ENCODE measurements at regions of chr19 and their contacts with region 1.

Region 1: GRCh38 chr19:18521885-18522624 is at the start of gene ELL:
- DNase-seq: peak; percentile 100
- ATAC-seq: peak; percentile 89
- H3K4me3 Mint-ChIP-seq: peak within 1 kb of the TSS; percentile 98
- H3K27ac Mint-ChIP-seq: peak within 1 kb of the TSS; percentile 96
- H3K4me1 Mint-ChIP-seq: peaks cover 24% of the 10 kb centered on the region
- H3K27me3 Mint-ChIP-seq: no peaks in the 10 kb centered on the region
- CTCF ChIP-seq: no peak
- total RNA-seq, gene ELL: 29.0 and 32.6 TPM in 2 replicates

Region 2: DNA sequence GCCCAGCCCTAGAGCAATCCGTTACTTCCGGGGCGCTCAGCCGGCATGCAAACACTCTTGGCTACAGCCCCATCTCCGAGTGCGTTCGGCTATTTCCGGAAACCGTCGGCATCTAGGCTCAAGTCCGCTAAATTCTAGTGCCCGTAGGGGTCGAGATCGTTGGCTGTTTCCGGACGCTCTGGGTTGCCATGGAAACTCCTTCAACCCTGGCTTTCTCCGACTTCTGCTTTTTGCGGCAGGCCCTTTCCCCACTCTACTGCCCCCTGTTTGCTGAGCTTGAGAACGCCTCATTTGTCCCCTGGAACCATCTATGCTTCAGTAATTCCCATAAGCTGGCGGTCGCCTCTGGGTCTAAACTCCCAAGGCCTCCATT is 369.6 kb before region 1 on chr19:
- CTCF ChIA-PET with region 1: no interaction called
- POLR2A ChIA-PET with region 1: no interaction called
- intact Hi-C with region 1: loop called (anchors 1 kb)
- DNase-seq: peak; percentile 97
- ATAC-seq: peak; percentile 70
- H3K4me3 Mint-ChIP-seq: peak overlapping the region; percentile 89
- H3K27ac Mint-ChIP-seq: peak overlapping the region; percentile 94
- H3K4me1 Mint-ChIP-seq: peaks cover 22% of the 10 kb centered on the region
- H3K27me3 Mint-ChIP-seq: no peaks in the 10 kb centered on the region
- CTCF ChIP-seq: no peak

Region 3: DNA sequence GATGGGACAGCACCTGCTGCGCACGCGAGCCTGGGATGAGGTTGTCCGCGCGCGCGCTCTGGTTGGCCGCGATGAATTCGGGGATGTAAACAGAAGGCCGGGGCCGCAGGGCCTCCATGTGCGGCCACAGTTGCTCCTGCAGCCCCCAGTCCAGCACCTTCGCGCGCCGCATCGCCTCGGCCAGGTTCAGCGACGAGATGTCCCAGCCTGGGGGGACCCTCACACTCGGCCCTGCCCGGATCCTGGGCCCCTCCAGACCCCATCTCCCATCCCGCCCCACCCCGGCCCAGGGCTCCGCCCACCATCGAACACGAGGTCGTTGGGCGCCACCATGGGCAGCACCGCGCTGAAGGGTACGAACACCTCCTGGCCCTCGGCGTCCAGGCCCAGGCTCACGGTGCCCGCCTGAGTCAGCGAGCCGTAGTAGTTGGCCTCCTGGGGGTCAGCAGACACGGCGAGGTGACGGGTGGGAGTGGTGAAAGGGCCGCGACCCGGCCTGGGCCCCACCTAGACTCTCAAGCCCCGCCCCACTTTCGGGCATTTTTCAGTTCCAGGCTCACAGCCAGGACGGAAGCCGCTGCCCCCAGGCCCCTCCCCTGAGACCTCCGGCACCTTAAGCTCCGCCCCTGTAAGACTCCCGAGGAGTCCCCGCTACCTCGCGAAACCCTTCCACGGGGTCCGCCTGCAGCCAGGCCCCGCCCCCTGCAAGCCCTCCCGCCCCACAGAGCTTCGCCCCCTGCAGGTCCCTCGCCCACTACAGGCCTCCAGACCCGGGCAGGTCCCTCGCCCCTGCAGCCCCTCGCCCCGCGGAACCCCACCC is 85.2 kb before region 1 on chr19:
- CTCF ChIA-PET with region 1: no interaction called
- POLR2A ChIA-PET with region 1: interaction called, 5 read pairs
- intact Hi-C with region 1: loop called (anchors 1 kb)
- DNase-seq: peak; percentile 71
- ATAC-seq: peak; percentile 72
- H3K4me3 Mint-ChIP-seq: peak overlapping the region; percentile 78
- H3K27ac Mint-ChIP-seq: no peak overlapping the region
- H3K4me1 Mint-ChIP-seq: peaks cover 38% of the 10 kb centered on the region
- H3K27me3 Mint-ChIP-seq: no peaks in the 10 kb centered on the region
- CTCF ChIP-seq: no peak

Region 4: DNA sequence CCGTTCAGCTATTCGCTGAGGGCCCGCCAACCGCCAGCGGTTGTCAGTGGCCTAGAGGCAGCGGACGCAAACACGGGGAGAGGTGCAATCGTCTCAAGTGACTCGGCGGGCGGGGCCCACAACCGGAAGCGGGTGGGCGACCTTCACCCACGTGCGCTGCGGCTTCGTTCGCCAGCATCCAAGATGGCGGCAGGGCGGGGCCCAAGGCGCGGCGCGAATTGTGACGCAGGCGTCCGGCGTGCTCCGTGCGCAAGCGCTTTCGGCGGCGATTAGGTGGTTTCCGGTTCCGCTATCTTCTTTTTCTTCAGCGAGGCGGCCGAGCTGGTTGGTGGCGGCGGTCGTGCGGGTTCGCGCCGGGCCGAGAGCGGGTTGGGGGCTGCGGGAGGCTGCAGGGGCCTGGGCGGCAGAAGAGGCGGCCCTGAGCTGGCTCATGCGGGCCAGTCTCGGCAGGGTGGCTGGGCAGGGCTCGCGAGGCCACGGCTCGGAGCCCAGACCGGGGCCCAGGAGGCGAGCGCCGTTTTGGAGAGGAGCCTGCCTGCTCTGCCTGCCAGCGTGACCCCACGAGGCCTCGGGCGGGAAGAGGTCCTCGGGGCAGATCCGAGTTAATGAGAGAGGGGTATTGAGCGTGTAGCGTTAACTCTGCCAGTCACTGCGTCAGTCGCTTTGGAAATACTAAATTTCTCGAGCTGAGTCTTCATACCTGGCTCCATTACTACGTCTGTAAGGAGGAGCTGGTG is 49.7 kb after region 1 on chr19 and contains the start of gene UBA52:
- CTCF ChIA-PET with region 1: interaction called, 14 read pairs
- POLR2A ChIA-PET with region 1: interaction called, 51 read pairs
- intact Hi-C with region 1: loop called (anchors 1 kb)
- DNase-seq: peak; percentile 100
- ATAC-seq: peak; percentile 93
- H3K4me3 Mint-ChIP-seq: peak within 1 kb of the TSS; percentile 94
- H3K27ac Mint-ChIP-seq: peak within 1 kb of the TSS; percentile 93
- H3K4me1 Mint-ChIP-seq: peaks cover 30% of the 10 kb centered on the region
- H3K27me3 Mint-ChIP-seq: no peaks in the 10 kb centered on the region
- CTCF ChIP-seq: no peak
- total RNA-seq, gene UBA52: 1,962 and 2,164 TPM in 2 replicates

Region 5: DNA sequence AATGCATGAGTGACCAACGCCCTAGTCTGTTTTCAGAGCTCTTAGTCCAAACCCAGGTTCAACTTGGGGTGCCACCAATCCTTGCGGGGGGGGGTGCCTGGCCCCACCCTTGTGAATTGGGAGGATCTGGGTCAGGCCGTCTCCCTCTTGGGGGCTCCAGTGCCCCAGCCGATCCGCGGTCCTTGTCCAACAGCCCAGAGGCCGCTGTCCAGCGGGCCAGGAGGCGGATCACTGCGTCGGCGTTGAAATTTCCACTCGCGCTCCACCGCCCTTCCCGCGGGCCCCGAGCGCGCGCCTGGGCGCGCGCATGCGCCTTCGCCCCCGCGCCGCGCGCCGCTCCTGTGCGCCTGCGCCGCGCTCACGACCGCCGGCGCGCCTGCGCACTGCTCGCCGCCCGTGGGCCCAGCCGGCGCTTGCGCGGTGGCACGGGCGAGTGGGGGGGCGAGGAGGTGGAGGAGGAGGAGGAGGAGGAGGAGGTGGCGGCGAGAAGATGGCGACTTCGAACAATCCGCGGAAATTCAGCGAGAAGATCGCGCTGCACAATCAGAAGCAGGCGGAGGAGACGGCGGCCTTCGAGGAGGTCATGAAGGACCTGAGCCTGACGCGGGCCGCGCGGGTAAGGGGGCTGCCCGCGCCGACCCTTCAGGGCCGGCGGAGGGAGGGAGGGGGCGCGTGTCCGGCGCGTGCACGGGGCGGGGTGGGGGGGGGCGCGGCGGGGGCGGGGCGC is 161.3 kb after region 1 on chr19 and contains the start of gene CRTC1:
- CTCF ChIA-PET with region 1: no interaction called
- POLR2A ChIA-PET with region 1: interaction called, 3 read pairs
- intact Hi-C with region 1: loop called (anchors 1 kb)
- DNase-seq: peak; percentile 96
- ATAC-seq: peak; percentile 87
- H3K4me3 Mint-ChIP-seq: peak within 1 kb of the TSS; percentile 92
- H3K27ac Mint-ChIP-seq: peak within 1 kb of the TSS; percentile 95
- H3K4me1 Mint-ChIP-seq: peaks cover 31% of the 10 kb centered on the region
- H3K27me3 Mint-ChIP-seq: no peaks in the 10 kb centered on the region
- CTCF ChIP-seq: no peak
- total RNA-seq, gene CRTC1: 13.1 and 15.5 TPM in 2 replicates

Region 6: GRCh38 chr19:18865973-18866799 is 344.1 kb after region 1 on chr19:
- CTCF ChIA-PET with region 1: interaction called, 3 read pairs
- POLR2A ChIA-PET with region 1: no interaction called
- intact Hi-C with region 1: loop called (anchors 1 kb)
- DNase-seq: peak; percentile 64
- ATAC-seq: peak; percentile 82
- H3K4me3 Mint-ChIP-seq: no peak overlapping the region
- H3K27ac Mint-ChIP-seq: no peak overlapping the region
- H3K4me1 Mint-ChIP-seq: peaks cover 15% of the 10 kb centered on the region
- H3K27me3 Mint-ChIP-seq: peaks cover 4% of the 10 kb centered on the region
- CTCF ChIP-seq: peak; percentile 60